ENCODE measurements at regions of chr19 and their contacts with region 1.

Region 1: DNA sequence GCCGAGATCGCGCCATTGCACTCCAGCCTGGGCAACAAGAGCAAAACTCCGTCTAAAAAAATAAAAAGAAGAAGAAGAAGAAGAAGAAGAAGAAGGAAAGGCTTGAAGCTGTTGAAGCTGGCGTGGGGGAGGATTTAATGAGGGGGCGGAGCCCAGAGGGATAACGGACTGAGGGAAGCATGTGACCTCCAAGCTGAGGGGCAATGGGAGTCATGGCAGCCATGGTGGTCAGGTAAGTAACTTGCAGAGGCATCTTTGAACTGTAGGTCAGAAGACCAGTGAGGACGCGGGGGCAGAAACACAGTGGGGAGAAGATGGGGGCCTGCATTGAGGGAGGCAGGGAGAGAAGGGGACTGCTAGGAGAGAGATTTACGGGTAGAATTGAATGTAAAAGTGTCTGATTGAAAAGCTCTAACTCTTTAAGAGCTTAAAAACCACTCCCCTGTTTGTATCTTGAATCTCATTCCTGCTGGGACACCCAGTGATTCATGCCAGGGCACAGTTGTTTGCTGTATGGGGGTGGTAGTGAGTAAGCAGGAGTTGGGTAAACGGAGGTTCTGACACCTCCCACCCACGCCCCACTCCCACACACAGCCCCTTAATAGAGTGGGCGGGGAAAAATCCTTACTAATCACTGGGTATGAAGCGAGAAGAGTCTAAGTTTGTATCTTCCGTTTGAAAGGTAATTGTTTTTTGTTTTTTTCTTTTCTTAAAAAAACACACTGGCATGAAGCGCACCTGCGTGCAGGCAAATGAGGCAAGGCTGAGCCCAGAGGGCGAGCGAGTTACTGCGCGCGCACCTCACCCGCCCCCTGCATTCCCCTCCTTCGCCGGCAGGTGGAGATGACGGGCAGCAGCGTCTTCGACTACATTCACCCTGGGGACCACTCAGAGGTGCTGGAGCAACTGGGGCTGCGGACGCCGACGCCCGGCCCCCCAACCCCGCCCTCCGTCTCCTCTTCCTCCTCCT is 13.0 kb downstream of the TMEM160 start:
- DNase-seq: peak; percentile 42
- H3K4me3 ChIP-seq: peak overlapping the region; percentile 41
- H3K27me3 ChIP-seq: no peaks in the 10 kb centered on the region; the same call in 1 of the 2 replicates
- CTCF ChIP-seq: peak; percentile 98

Region 2: DNA sequence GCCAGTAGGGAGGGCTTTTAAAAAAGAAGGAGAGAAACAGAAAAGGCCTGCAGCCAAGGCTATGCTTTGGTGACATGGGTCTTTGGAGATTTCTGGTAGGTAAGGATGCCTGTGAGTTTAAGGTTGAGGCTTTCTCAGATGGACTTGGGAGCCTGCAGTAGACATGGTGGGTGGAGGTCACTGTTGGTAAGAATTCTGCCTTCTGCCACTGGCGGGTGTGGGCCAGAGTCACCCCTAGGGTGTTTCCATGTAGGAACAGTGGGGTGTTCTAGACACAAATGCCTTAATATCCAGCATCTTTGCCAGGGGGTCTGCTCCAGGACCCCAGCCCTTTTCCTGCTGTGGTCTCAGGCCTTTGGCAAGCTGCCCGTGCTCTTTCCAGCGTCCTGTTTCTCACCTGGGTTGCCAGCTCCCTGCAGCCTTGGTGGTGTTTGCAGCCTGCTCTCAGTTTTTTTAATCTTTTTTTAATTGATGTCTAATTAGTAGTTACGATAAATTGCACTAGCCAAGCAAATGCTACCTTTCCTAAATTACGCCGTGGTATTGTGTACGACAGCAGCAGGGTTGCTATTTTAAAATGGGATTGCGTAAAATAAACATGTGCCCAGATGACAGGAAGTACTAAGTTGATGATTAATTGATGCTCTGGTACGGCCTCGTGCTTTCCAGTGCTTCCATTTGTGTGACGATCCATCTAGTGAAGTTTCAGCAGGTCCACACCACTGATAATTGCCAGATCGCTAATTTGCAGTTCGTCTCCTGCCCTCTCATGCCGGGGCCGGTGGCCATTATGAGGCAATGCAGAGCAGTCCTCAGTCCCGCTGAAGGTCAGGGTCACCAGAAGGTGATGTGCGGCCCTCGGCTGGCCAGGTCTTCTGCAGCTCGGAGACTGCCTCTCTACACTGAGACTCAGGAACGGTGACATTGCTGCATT is 51.1 kb before region 1 on chr19:
- CTCF ChIA-PET with region 1: no interaction called
- POLR2A ChIA-PET with region 1: no interaction called
- DNase-seq: no peak
- H3K4me3 ChIP-seq: no peak overlapping the region
- H3K27me3 ChIP-seq: no peaks in the 10 kb centered on the region
- CTCF ChIP-seq: no peak

Region 3: DNA sequence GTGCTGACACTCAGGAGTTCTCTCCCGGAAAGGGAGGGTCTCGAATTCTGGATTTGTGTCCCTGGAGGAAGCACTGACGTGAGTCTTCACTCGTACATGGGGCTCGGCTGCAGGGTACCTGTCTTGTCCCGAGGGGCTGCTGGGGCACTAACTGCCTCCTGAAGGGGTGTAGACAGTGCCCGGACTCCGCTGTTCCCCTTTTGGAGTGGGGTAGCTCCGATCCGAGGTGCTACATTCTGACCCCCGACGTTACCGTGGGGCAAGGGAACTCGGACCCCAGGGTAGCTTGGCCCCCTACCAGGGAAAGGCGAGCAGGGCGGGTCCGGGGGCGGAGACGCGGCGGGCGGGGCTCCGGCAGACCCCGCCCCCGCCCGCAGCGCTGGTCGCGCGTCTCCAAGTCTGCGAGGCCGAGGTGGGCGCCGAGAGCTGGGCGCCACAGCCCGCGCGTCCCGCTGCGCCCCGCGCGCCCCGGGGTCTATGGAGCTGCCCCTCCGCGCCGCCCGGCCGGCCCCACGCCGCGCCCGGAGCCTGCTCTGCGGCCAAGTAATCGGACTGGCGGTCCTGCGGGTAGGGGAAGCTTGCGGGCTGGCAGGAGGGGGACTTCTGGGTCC is 15.9 kb before region 1 on chr19 and contains the start of gene NPAS1:
- CTCF ChIA-PET with region 1: interaction called, 10 read pairs
- POLR2A ChIA-PET with region 1: no interaction called
- DNase-seq: no peak
- H3K4me3 ChIP-seq: peak within 1 kb of the TSS; percentile 47
- H3K27me3 ChIP-seq: peaks cover 9% of the 10 kb centered on the region; the same call in 1 of the 2 replicates
- CTCF ChIP-seq: no peak
- polyA plus RNA-seq, gene NPAS1: 2.6 and 4.6 TPM in 2 replicates

Region 4: DNA sequence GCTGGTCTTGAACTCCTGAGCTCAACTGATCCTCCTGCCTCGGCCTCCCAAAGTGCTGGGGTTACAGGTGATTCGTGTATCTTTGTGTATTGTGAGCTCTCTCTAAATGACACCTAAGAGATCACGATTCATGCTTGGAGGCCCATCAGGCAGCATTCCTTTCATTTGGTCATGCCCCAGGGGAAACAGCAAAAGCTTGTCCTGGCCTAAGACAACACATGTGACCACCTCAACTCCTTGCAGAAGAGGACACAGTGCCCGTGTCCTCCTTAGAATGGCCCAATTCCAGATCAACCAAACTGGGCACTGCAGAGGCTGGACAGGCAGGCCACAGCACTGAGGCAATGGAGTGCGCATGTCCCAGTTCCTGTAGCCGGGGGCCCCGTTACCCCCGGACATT is 45.7 kb after region 1 on chr19:
- CTCF ChIA-PET with region 1: interaction called, 20 read pairs
- POLR2A ChIA-PET with region 1: no interaction called
- DNase-seq: no peak
- H3K4me3 ChIP-seq: no peak overlapping the region
- H3K27me3 ChIP-seq: no peaks in the 10 kb centered on the region
- CTCF ChIP-seq: no peak

Region 5: GRCh38 chr19:47124937-47125668 is 89.7 kb after region 1 on chr19:
- CTCF ChIA-PET with region 1: interaction called, 17 read pairs
- POLR2A ChIA-PET with region 1: no interaction called
- DNase-seq: no peak
- H3K4me3 ChIP-seq: no peak overlapping the region
- H3K27me3 ChIP-seq: no peaks in the 10 kb centered on the region
- CTCF ChIP-seq: peak; percentile 61